Sigmoid colon (tissue), 7 donors: ENCODE measurements at regions of chr9 and their contacts with region 1.

Region 1: GRCh38 chr9:35489313-35490154 is at the start of gene RUSC2:
- DNase-seq: peak; percentile 94
- H3K4me3 ChIP-seq: peak within 1 kb of the TSS; percentile 69 to 96 (median 88)
- H3K27ac ChIP-seq: peak within 1 kb of the TSS; percentile 94 to 99 (median 98)
- H3K4me1 ChIP-seq: peaks cover 0 to 33% (median 23%) of the 10 kb centered on the region in 4 donors
- H3K27me3 ChIP-seq: no peaks in the 10 kb centered on the region
- CTCF ChIP-seq: peak; percentile 37 to 69 (median 60)
- EP300 ChIP-seq: peak in 2 of 4 donors; percentile 36 to 73
- POLR2A ChIP-seq: peak; percentile 24 to 46
- total RNA-seq, gene RUSC2: 30.9 to 47.1 (median 43.4) TPM

Region 2: GRCh38 chr9:34994260-34994899 is 495.2 kb before region 1 on chr9:
- intact Hi-C with region 1: loop called (anchors 10 kb)
- DNase-seq: no peak
- H3K4me3 ChIP-seq: peak overlapping the region in 2 of 4 donors; percentile 5 to 18
- H3K27ac ChIP-seq: peak overlapping the region in 3 of 4 donors; percentile 95 to 100 (median 98)
- H3K4me1 ChIP-seq: peaks cover 0 to 77% (median 72%) of the 10 kb centered on the region in 4 donors
- H3K27me3 ChIP-seq: no peaks in the 10 kb centered on the region
- CTCF ChIP-seq: peak; percentile 48 to 66 (median 60)
- EP300 ChIP-seq: no peak
- POLR2A ChIP-seq: no peak

Region 3: GRCh38 chr9:35510745-35511428 is 21.4 kb after region 1 on chr9:
- intact Hi-C with region 1: loop called (anchors 2 kb)
- DNase-seq: peak; percentile 94
- H3K4me3 ChIP-seq: no peak overlapping the region
- H3K27ac ChIP-seq: peak overlapping the region; percentile 80 to 90 (median 86)
- H3K4me1 ChIP-seq: peaks cover 0 to 86% (median 77%) of the 10 kb centered on the region in 4 donors
- H3K27me3 ChIP-seq: no peaks in the 10 kb centered on the region
- CTCF ChIP-seq: peak in 2 of 4 experiments; percentile 16 to 20
- EP300 ChIP-seq: peak in 3 of 4 donors; percentile 42 to 69 (median 60)
- POLR2A ChIP-seq: no peak

Region 4: GRCh38 chr9:35538361-35539234 is 49.1 kb after region 1 on chr9:
- intact Hi-C with region 1: loop called (anchors 5 kb)
- DNase-seq: peak; percentile 93
- H3K4me3 ChIP-seq: peak overlapping the region; percentile 22 to 52 (median 44)
- H3K27ac ChIP-seq: peak overlapping the region; percentile 86 to 94 (median 88)
- H3K4me1 ChIP-seq: peaks cover 0 to 75% (median 66%) of the 10 kb centered on the region in 4 donors
- H3K27me3 ChIP-seq: no peaks in the 10 kb centered on the region
- CTCF ChIP-seq: no peak
- EP300 ChIP-seq: peak in 1 of 4 donors; percentile 3
- POLR2A ChIP-seq: peak in 1 of 2 donors; percentile 29

Region 5: DNA sequence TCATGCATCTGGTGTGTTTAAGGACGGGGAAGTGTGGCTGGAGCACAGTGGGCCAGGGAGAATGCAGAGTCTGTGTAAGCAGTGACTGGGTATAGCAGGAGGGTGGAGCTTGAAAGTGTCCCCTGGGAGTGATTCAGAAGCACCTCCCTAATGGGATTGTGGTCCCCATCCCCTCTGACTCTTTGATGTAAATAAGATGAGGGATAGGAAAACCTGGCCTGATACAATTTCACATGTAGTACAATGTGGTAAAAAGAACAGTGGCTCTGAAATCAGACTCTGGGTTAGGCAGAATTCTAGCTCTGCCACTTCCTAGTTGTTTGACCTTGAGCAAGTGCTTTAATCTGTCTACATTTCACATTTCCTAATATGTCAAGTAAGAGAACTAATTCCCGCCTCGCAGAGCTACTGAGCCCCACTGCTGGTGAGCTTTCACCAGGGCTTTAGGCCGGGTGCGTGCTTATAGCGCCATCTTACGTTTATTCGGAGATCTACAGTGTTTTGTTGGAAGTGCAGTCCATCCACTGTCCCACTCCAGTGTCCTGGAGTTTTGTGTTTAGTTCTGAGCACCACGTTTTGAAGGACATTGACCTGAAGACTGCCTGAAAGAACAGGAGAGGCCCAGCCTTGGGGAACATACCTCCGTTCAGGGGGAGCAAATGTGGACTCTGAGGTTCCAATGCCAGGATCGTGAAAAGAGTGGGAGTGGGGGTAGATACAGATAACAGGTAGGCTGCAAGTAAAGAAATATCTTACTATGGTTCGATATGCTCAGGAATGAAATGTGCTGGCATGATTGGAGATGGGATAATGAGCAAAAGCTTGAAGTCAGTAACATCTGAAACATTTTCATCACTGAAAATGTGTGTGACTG is 64.4 kb after region 1 on chr9:
- intact Hi-C with region 1: loop called (anchors 1 kb)
- DNase-seq: peak; percentile 92
- H3K4me3 ChIP-seq: peak overlapping the region in 1 of 4 donors; percentile 1
- H3K27ac ChIP-seq: peak overlapping the region; percentile 75 to 86 (median 79)
- H3K4me1 ChIP-seq: peaks cover 0 to 47% (median 40%) of the 10 kb centered on the region in 4 donors
- H3K27me3 ChIP-seq: no peaks in the 10 kb centered on the region
- CTCF ChIP-seq: peak; percentile 87 to 93 (median 90)
- EP300 ChIP-seq: no peak
- POLR2A ChIP-seq: no peak

Region 6: DNA sequence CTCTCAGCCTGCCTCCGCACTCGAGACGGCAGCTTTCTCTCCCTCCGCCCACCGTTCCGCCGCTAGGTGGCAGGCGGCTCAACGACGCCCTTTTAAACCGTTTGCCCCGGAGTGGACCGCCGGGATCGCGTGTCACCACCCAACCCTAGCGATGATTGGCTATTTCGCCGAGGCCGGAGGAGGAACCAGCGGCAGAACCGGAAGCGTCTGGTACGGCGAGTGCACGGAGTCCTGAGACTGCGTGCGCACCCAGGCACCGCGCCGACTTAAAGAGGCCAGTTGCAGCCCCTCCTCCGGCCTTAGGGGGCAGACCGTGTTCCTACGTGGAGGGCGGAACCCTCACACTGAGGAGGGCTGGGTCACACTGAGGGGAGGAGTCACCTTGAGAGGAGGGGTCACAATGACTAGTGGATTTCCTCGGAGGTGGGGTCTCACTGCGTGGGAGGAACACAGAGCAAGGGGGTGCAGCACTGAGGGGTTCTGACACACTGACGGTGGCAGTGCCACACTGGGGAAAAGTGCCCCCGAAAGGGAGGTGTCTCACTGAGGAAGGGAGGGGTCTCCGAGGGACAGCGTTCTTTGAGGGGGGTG is 114.5 kb after region 1 on chr9:
- intact Hi-C with region 1: loop called (anchors 2 kb)
- DNase-seq: peak; percentile 100
- H3K4me3 ChIP-seq: peak overlapping the region; percentile 51 to 91 (median 86)
- H3K27ac ChIP-seq: peak overlapping the region; percentile 93 to 98 (median 96)
- H3K4me1 ChIP-seq: peaks cover 0 to 35% (median 29%) of the 10 kb centered on the region in 4 donors
- H3K27me3 ChIP-seq: no peaks in the 10 kb centered on the region
- CTCF ChIP-seq: peak; percentile 90 to 99 (median 94)
- EP300 ChIP-seq: peak in 1 of 4 donors; percentile 69
- POLR2A ChIP-seq: peak; percentile 48 to 76

Region 7: GRCh38 chr9:35646533-35647265 is 157.2 kb after region 1 on chr9:
- intact Hi-C with region 1: loop called (anchors 2 kb)
- DNase-seq: peak; percentile 96
- H3K4me3 ChIP-seq: peak overlapping the region; percentile 38 to 63 (median 56)
- H3K27ac ChIP-seq: peak overlapping the region; percentile 77 to 90 (median 87)
- H3K4me1 ChIP-seq: peaks cover 0 to 13% (median 11%) of the 10 kb centered on the region in 4 donors
- H3K27me3 ChIP-seq: no peaks in the 10 kb centered on the region
- CTCF ChIP-seq: peak; percentile 93 to 98 (median 95)
- EP300 ChIP-seq: peak in 1 of 4 donors; percentile 10
- POLR2A ChIP-seq: peak; percentile 86 to 91

Region 8: GRCh38 chr9:35689601-35690430 is 200.3 kb after region 1 on chr9 and contains the start of gene TPM2:
- intact Hi-C with region 1: no loop called
- DNase-seq: peak; percentile 96
- H3K4me3 ChIP-seq: peak within 1 kb of the TSS; percentile 88 to 97 (median 94)
- H3K27ac ChIP-seq: peak within 1 kb of the TSS; percentile 95 to 100 (median 98)
- H3K4me1 ChIP-seq: peaks cover 0 to 46% (median 29%) of the 10 kb centered on the region in 4 donors
- H3K27me3 ChIP-seq: no peaks in the 10 kb centered on the region
- CTCF ChIP-seq: peak in 1 of 4 experiments; percentile 11
- EP300 ChIP-seq: peak in 3 of 4 donors; percentile 10 to 47 (median 35)
- POLR2A ChIP-seq: peak; percentile 91 to 97
- total RNA-seq, gene TPM2: 3,590 to 8,131 (median 6,107) TPM